ENCODE measurements at regions of chr11 and their contacts with region 1.

Region 1: GRCh38 chr11:20127671-20128527 is 32.4 kb downstream of the DBX1 start:
- DNase-seq: peak; percentile 66 to 70
- ATAC-seq: peak; percentile 87 to 93
- H3K4me3 ChIP-seq: no peak overlapping the region
- H3K27ac ChIP-seq: peak overlapping the region; percentile 59 to 61; a peak in 5 of 6 replicates
- H3K4me1 ChIP-seq: peaks cover 16% of the 10 kb centered on the region; the same call in 2 of the 3 replicates
- CTCF ChIP-seq: peak; percentile 83
- EP300 ChIP-seq: no peak
- POLR2A ChIP-seq: no peak
- RAD21 ChIP-seq: peak; percentile 86 to 94

Region 2: GRCh38 chr11:19912958-19913892 is 214.7 kb before region 1 on chr11:
- CTCF ChIA-PET with region 1: interaction called, 96 read pairs
- POLR2A ChIA-PET with region 1: no interaction called
- DNase-seq: no peak
- ATAC-seq: no peak
- H3K4me3 ChIP-seq: no peak overlapping the region
- H3K27ac ChIP-seq: no peak overlapping the region
- H3K4me1 ChIP-seq: 0 out of 3 replicates have a peak, but pooled peaks cover 4% of the 10 kb centered on the region
- CTCF ChIP-seq: no peak
- EP300 ChIP-seq: no peak
- POLR2A ChIP-seq: no peak
- RAD21 ChIP-seq: no peak

Region 3: DNA sequence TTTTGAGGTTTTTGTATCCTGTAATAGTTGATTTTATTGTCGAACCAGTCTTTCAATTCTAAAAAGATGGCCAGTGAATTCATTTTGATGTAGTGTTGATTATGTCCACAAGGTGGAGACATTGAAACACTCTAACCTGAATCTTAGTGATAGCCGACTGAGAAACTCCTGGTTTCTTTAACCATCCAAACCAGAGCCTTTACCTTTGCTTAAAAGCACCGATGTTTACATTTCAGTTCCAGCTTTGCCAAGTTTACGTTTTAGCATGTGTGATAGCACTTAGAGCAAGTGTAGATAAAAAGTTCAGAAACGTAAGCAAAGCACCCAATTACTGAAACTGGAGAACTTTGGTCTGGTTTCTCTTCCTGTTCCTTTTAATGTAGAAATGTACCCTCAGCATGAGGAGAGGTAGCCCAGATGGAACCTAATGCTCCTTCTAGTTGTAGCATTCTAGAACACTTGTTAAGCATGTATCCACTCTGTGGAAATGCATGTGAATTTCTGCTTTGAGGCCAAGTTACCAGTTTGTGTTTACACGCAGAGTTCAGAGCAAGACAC is 176.3 kb before region 1 on chr11:
- CTCF ChIA-PET with region 1: interaction called, 172 read pairs
- POLR2A ChIA-PET with region 1: interaction called, 6 read pairs
- DNase-seq: peak; percentile 35 to 64
- ATAC-seq: peak; percentile 56 to 58; a peak in 4 of 6 replicates
- H3K4me3 ChIP-seq: no peak overlapping the region
- H3K27ac ChIP-seq: peak overlapping the region; percentile 79 to 86
- H3K4me1 ChIP-seq: peaks cover 41% of the 10 kb centered on the region
- CTCF ChIP-seq: peak; percentile 87
- EP300 ChIP-seq: no peak
- POLR2A ChIP-seq: no peak
- RAD21 ChIP-seq: peak; percentile 79 to 89

Region 4: DNA sequence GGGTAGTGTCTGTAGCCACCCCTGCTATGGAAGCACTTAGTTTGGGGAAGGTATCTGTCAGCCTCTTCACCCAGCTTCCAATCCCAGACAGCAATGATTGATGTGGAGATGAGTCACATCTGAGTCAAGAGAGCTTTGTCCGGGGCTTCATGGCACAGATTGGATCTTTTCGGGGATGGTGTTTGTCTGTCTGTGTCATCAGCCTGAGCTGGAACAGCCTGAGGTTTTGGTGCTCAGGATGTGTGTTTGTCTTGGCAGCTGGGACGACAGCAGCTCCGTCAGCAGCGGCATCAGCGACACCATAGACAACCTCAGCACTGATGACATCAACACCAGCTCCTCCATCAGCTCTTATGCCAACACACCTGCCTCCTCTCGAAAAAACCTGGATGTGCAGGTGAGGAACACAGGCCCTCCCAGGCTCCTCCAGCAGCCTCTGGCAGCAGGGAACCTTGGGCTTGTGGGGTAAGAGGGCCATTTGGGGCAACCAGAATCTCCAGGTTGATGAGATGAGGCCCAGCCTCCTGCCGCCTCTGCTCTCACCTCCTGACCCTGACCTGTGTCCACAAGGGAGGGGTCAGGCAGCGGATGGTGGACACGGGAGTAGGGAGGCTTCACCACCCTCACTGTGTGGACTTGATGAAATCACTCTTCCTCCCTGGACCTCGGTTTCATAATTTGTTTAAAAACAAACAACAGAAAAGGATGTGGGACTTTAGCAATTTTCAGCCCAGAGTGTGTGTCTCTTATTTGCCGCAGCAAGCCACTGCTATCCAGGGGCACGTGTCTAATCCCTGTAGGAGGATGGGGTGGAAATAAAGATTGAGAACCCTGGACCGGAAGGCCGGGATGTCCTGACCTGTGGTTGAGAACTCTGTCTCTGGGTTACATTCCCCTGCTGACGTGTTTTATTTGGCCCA is 91.9 kb before region 1 on chr11:
- CTCF ChIA-PET with region 1: interaction called, 10 read pairs
- POLR2A ChIA-PET with region 1: no interaction called
- DNase-seq: peak; percentile 96
- ATAC-seq: peak; percentile 94
- H3K4me3 ChIP-seq: no peak overlapping the region
- H3K27ac ChIP-seq: peak overlapping the region; percentile 85 to 93
- H3K4me1 ChIP-seq: peaks cover 78% of the 10 kb centered on the region
- CTCF ChIP-seq: 0 out of 3 replicates have a peak, but pooled peaks have one; percentile 11
- EP300 ChIP-seq: peak; percentile 88 to 90; a peak in 4 of 5 replicates
- POLR2A ChIP-seq: no peak
- RAD21 ChIP-seq: peak; percentile 8 to 48; a peak in 4 of 5 replicates

Region 5: GRCh38 chr11:20110908-20111669 is 16.8 kb before region 1 on chr11:
- CTCF ChIA-PET with region 1: interaction called, 150 read pairs
- POLR2A ChIA-PET with region 1: interaction called, 5 read pairs
- DNase-seq: peak; percentile 70 to 85
- ATAC-seq: peak; percentile 56 to 78
- H3K4me3 ChIP-seq: no peak overlapping the region
- H3K27ac ChIP-seq: peak overlapping the region; percentile 98
- H3K4me1 ChIP-seq: peaks cover 42% of the 10 kb centered on the region
- CTCF ChIP-seq: peak; percentile 83
- EP300 ChIP-seq: no peak; a peak in 1 of 5 replicates
- POLR2A ChIP-seq: no peak
- RAD21 ChIP-seq: peak; percentile 73 to 81

Region 6: GRCh38 chr11:20201231-20201630 is 73.3 kb after region 1 on chr11:
- CTCF ChIA-PET with region 1: no interaction called
- POLR2A ChIA-PET with region 1: no interaction called
- DNase-seq: no peak
- ATAC-seq: no peak
- H3K4me3 ChIP-seq: no peak overlapping the region
- H3K27ac ChIP-seq: no peak overlapping the region
- H3K4me1 ChIP-seq: no peaks in the 10 kb centered on the region
- CTCF ChIP-seq: no peak
- EP300 ChIP-seq: no peak
- POLR2A ChIP-seq: no peak
- RAD21 ChIP-seq: no peak

Region 7: GRCh38 chr11:20355221-20356219 is 227.6 kb after region 1 on chr11:
- CTCF ChIA-PET with region 1: interaction called, 123 read pairs
- POLR2A ChIA-PET with region 1: no interaction called
- DNase-seq: peak; percentile 52 to 63
- ATAC-seq: peak; percentile 92 to 94
- H3K4me3 ChIP-seq: no peak overlapping the region
- H3K27ac ChIP-seq: no peak overlapping the region
- H3K4me1 ChIP-seq: peaks cover 13% of the 10 kb centered on the region
- CTCF ChIP-seq: peak; percentile 57
- EP300 ChIP-seq: no peak
- POLR2A ChIP-seq: no peak
- RAD21 ChIP-seq: peak; percentile 27 to 35; a peak in 3 of 5 replicates

Region 8: DNA sequence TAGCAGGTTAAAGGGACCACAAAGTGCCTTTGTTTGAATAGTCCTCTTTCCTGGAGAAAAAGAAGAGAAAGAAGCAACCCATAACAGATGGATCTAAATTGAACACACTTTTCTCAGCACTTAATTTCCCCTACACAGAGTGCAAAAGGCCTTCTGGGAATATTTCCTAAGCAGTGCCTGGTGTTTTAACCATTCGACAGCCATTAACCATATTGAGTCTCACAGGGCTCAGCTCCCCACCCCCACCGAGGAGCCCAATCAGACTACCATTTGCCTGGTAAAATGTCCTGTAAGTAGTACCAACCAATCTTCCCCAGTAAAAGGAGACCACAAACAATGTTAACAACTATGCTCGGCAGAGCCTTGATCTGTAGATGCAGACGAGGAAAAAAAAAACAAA is 430.8 kb after region 1 on chr11:
- CTCF ChIA-PET with region 1: no interaction called
- POLR2A ChIA-PET with region 1: no interaction called
- DNase-seq: no peak
- ATAC-seq: no peak
- H3K4me3 ChIP-seq: no peak overlapping the region
- H3K27ac ChIP-seq: no peak overlapping the region
- H3K4me1 ChIP-seq: no peaks in the 10 kb centered on the region
- CTCF ChIP-seq: no peak
- EP300 ChIP-seq: no peak
- POLR2A ChIP-seq: no peak
- RAD21 ChIP-seq: no peak